Naive thymus-derived CD4-positive, alpha-beta T cell (primary cell): ENCODE measurements at regions of chr2 and their contacts with region 1.

Region 1: DNA sequence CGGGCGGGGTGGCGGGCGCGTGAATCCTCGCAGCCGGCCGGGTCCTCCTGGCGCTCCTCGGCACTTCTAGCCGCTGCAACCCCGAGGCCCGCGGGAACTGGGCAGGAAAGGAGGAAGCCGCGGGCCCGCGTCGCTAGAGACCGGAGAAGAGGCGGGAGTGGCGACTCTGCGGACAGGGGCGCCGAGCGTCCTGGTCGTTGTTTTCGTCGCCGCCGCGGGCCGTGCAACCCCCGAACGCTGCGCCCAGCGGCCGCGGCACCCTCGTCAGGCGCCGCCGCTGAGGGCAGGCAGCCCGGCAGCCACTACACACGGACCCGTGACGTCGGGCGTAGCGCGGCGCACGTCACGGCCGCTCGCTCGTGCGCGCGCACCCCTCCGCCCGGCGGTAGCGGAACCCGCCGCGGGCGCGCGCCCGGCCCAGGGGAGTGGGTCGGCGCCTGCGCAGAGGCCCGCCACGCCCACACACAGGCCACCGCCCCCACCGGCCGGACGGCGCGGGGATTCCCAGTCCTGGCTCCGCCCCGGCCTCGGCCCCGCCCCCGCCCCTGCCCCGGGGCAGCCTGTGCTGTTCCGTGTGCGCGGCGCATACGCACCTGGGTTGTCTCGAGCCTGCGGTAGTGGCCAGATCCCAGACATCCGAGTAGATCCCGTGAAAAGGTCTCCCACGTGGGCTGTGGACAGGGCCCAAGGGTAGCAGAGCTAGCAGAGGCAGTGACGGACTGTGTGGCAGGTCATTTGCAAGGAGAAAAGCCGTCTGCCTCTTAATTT is at the start of gene MAP3K2:
- DNase-seq: peak; percentile 89 to 97 (median 93)
- ATAC-seq: peak; percentile 88
- H3K4me3 ChIP-seq: peak within 1 kb of the TSS; percentile 78
- H3K4me3 Mint-ChIP-seq: peak within 1 kb of the TSS; percentile 87 to 97 (median 91)
- H3K27ac ChIP-seq: peak within 1 kb of the TSS; percentile 100
- H3K27ac Mint-ChIP-seq: peak within 1 kb of the TSS; percentile 95 to 99 (median 97)
- H3K4me1 ChIP-seq: peaks cover 23 to 30% of the 10 kb centered on the region in 2 donors
- H3K4me1 Mint-ChIP-seq: peaks cover 45 to 71% (median 67%) of the 10 kb centered on the region in 7 donors
- H3K27me3 ChIP-seq: no peaks in the 10 kb centered on the region
- H3K27me3 Mint-ChIP-seq: peaks cover 0 to 1% (median 0%) of the 10 kb centered on the region in 5 donors
- total RNA-seq, gene MAP3K2: 60.5 to 111 (median 84.5) TPM

Region 2: DNA sequence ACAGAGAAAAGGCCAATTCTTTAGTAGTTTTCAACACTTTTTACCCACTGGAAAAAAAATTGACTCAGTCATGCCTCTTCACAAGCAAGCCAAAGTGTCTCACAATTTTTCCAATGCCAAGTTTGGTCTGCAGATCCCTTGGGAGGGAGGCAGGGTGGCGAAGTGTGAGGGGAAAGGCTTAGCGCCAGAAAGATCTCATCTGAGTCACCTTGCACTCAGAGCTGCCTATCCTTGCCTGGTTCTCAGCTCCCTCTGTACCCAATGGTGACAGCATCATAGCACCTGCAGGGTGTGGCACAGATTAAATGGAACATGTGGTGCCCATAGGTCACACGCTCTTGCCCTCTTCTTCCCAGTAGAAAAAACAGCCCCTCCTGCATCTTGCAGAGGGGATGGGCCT is 787.1 kb before region 1 on chr2:
- CTCF ChIA-PET with region 1: no interaction called
- POLR2A ChIA-PET with region 1: no interaction called
- intact Hi-C with region 1: no loop called
- DNase-seq: no peak
- ATAC-seq: no peak
- H3K4me3 ChIP-seq: no peak overlapping the region
- H3K4me3 Mint-ChIP-seq: no peak overlapping the region
- H3K27ac ChIP-seq: no peak overlapping the region
- H3K27ac Mint-ChIP-seq: no peak overlapping the region
- H3K4me1 ChIP-seq: no peaks in the 10 kb centered on the region
- H3K4me1 Mint-ChIP-seq: no peaks in the 10 kb centered on the region
- H3K27me3 ChIP-seq: no peaks in the 10 kb centered on the region
- H3K27me3 Mint-ChIP-seq: peaks cover 0 to 12% (median 0%) of the 10 kb centered on the region in 5 donors

Region 3: GRCh38 chr2:127086990-127087790 is 300.6 kb before region 1 on chr2:
- CTCF ChIA-PET with region 1: interaction called, 3 read pairs
- POLR2A ChIA-PET with region 1: interaction called, 3 read pairs
- intact Hi-C with region 1: loop called (anchors 5 to 10 kb)
- DNase-seq: no peak
- ATAC-seq: peak; percentile 20
- H3K4me3 ChIP-seq: no peak overlapping the region
- H3K4me3 Mint-ChIP-seq: peak overlapping the region in 4 of 10 donors; percentile 10 to 34 (median 26)
- H3K27ac ChIP-seq: no peak overlapping the region
- H3K27ac Mint-ChIP-seq: peak overlapping the region in 8 of 9 donors; percentile 20 to 99 (median 62)
- H3K4me1 ChIP-seq: peaks cover 40 to 41% of the 10 kb centered on the region in 2 donors
- H3K4me1 Mint-ChIP-seq: peaks cover 34 to 56% (median 43%) of the 10 kb centered on the region in 7 donors
- H3K27me3 ChIP-seq: no peaks in the 10 kb centered on the region
- H3K27me3 Mint-ChIP-seq: peaks cover 0 to 9% (median 0%) of the 10 kb centered on the region in 5 donors

Region 4: DNA sequence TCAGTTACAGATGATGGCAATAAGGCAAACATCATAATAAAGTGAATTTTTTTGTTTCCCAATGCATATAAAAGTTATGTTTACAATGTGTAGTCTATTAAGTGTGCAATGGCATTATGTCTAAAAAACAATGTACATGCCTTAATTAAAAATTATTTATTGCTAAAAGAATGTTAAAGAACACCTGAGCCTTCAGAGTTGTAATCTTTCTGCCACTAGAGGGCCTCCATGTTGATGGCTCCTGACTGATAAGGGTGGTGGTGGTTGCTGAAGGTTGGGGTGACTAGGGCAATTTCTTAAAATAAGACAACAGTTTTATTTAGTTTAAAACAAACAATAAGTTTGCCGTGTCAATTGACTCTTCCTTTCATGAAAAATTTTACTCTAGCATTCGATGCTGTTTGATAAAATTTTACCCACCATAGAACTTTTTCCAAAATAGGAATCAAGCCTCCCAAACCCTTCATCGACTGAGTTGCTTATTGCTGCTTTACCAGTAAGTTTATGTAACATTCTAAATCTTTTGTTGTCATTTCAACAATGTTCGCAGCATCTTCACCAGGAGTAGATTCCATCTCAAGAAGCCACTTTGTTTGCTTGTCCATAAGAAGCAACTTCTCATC is 32.3 kb before region 1 on chr2:
- CTCF ChIA-PET with region 1: interaction called, 3 read pairs
- POLR2A ChIA-PET with region 1: no interaction called
- intact Hi-C with region 1: loop called in 1 of 2 experiments (anchors 2 kb)
- DNase-seq: peak in 7 of 9 donors; percentile 15 to 60 (median 41)
- ATAC-seq: peak; percentile 82
- H3K4me3 ChIP-seq: no peak overlapping the region
- H3K4me3 Mint-ChIP-seq: no peak overlapping the region
- H3K27ac ChIP-seq: no peak overlapping the region
- H3K27ac Mint-ChIP-seq: peak overlapping the region in 4 of 9 donors; percentile 17 to 83 (median 27)
- H3K4me1 ChIP-seq: peaks cover 0 to 11% of the 10 kb centered on the region in 2 donors
- H3K4me1 Mint-ChIP-seq: peaks cover 25 to 82% (median 70%) of the 10 kb centered on the region in 7 donors
- H3K27me3 ChIP-seq: no peaks in the 10 kb centered on the region
- H3K27me3 Mint-ChIP-seq: no peaks in the 10 kb centered on the region

Region 5: GRCh38 chr2:127408004-127408806 is 20.4 kb after region 1 on chr2:
- CTCF ChIA-PET with region 1: interaction called, 3 read pairs
- POLR2A ChIA-PET with region 1: interaction called, 4 read pairs
- intact Hi-C with region 1: loop called (anchors 1 kb)
- DNase-seq: peak; percentile 46 to 92 (median 64)
- ATAC-seq: peak; percentile 92
- H3K4me3 ChIP-seq: peak overlapping the region; percentile 36
- H3K4me3 Mint-ChIP-seq: peak overlapping the region; percentile 61 to 87 (median 74)
- H3K27ac ChIP-seq: no peak overlapping the region
- H3K27ac Mint-ChIP-seq: peak overlapping the region in 3 of 9 donors; percentile 48 to 83 (median 58)
- H3K4me1 ChIP-seq: no peaks in the 10 kb centered on the region
- H3K4me1 Mint-ChIP-seq: peaks cover 4 to 26% (median 12%) of the 10 kb centered on the region in 7 donors
- H3K27me3 ChIP-seq: no peaks in the 10 kb centered on the region
- H3K27me3 Mint-ChIP-seq: peaks cover 0 to 10% (median 0%) of the 10 kb centered on the region in 5 donors

Region 6: DNA sequence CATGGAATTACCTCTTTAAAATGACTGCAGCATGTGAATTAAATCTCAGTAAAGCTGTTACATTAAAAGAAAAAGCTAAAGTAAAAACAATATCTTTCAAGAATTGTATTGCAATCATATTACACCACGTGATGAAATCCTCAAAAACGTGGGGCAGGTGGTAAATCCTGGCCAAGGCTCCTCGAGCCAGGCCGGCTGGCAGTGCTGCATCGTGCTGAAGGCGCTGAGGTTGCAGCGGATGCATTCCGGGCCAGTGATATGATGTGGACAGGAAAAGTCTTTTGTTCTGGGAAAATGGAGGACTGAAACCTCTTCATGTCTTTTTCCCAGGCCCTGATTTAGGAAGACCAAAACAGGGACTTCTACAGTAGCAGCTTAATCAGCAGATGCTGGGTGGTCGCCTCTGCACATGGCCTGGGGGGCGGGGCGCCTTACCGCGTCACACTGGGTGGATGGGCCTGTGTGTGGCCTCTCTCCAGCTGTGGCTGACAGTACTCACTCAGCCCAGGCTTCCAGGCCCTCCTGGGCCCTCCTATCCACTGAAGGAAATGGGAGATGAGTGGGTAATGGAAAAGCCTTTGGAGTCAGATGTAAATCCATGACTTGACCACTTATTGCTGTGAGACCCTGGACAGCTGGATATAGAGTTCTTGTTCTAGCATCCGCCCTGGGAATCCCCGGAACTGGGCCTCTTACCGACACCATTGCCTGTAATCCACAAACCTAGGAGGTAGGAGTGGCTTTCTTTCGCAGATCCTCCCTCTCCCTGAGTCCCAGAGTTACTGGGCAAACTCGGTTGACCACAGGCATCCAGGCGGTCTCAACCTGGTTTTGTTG is 75.5 kb after region 1 on chr2:
- CTCF ChIA-PET with region 1: no interaction called
- POLR2A ChIA-PET with region 1: no interaction called
- intact Hi-C with region 1: no loop called
- DNase-seq: no peak
- ATAC-seq: no peak
- H3K4me3 ChIP-seq: no peak overlapping the region
- H3K4me3 Mint-ChIP-seq: no peak overlapping the region
- H3K27ac ChIP-seq: no peak overlapping the region
- H3K27ac Mint-ChIP-seq: no peak overlapping the region
- H3K4me1 ChIP-seq: no peaks in the 10 kb centered on the region
- H3K4me1 Mint-ChIP-seq: peaks cover 7 to 22% (median 15%) of the 10 kb centered on the region in 7 donors
- H3K27me3 ChIP-seq: no peaks in the 10 kb centered on the region
- H3K27me3 Mint-ChIP-seq: no peaks in the 10 kb centered on the region

Region 7: DNA sequence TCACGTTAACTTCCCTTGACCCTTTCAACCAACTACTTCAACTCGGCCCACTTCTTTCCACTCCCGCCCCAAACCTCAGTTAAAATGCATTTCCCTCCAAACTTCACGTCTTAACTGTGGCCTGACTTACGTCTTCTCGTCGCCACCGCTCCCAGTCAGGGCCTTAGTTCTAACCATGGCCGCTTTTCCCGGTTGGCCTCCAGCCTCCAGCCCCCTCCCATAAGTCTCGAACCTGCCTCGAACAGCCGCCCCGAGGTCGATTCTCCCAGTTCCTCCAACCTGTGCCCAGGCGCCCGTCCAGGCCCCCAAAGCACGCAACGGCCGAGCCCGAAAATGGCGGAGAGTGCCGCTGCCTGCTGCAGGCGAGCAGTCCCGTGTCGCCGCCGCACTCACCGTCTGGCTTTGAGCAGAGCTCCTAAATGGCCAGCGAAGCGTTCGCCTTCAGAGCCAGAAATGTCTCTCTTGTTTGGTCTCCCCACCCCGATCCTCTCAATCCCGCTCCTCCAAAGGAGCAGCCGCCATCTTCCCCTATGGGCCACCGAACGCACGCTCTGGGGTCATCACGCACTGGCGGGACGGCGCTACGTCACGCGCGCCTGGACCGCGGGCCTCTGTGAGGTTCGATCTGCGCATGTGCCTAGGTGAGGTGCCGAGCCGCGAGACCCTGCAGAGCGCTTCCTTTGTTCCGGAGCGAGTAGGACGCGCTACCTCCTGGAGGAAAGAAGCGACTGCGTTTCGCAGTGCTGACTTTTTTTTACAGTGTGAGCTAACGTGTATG is 423.0 kb after region 1 on chr2 and contains the start of gene WDR33:
- CTCF ChIA-PET with region 1: no interaction called
- POLR2A ChIA-PET with region 1: interaction called, 3 read pairs
- intact Hi-C with region 1: loop called in 1 of 2 experiments (anchors 1 kb)
- DNase-seq: peak; percentile 84 to 94 (median 93)
- ATAC-seq: peak; percentile 97
- H3K4me3 ChIP-seq: peak within 1 kb of the TSS; percentile 79
- H3K4me3 Mint-ChIP-seq: peak within 1 kb of the TSS; percentile 91 to 100 (median 96)
- H3K27ac ChIP-seq: peak within 1 kb of the TSS; percentile 98
- H3K27ac Mint-ChIP-seq: peak within 1 kb of the TSS; percentile 94 to 100 (median 99)
- H3K4me1 ChIP-seq: peaks cover 17 to 24% of the 10 kb centered on the region in 2 donors
- H3K4me1 Mint-ChIP-seq: peaks cover 33 to 62% (median 51%) of the 10 kb centered on the region in 7 donors
- H3K27me3 ChIP-seq: no peaks in the 10 kb centered on the region
- H3K27me3 Mint-ChIP-seq: peaks cover 0 to 12% (median 0%) of the 10 kb centered on the region in 5 donors
- total RNA-seq, gene WDR33: 62.6 to 98.7 (median 72.3) TPM

Region 8: GRCh38 chr2:128090945-128091725 is 703.3 kb after region 1 on chr2 and contains the start of gene UGGT1:
- CTCF ChIA-PET with region 1: no interaction called
- POLR2A ChIA-PET with region 1: no interaction called
- intact Hi-C with region 1: loop called in 1 of 2 experiments (anchors 2 kb)
- DNase-seq: peak; percentile 75 to 94 (median 92)
- ATAC-seq: peak; percentile 99
- H3K4me3 ChIP-seq: peak within 1 kb of the TSS; percentile 86
- H3K4me3 Mint-ChIP-seq: peak within 1 kb of the TSS; percentile 88 to 98 (median 94)
- H3K27ac ChIP-seq: peak within 1 kb of the TSS; percentile 75
- H3K27ac Mint-ChIP-seq: peak within 1 kb of the TSS; percentile 91 to 97 (median 94)
- H3K4me1 ChIP-seq: peaks cover 13 to 18% of the 10 kb centered on the region in 2 donors
- H3K4me1 Mint-ChIP-seq: peaks cover 27 to 60% (median 56%) of the 10 kb centered on the region in 7 donors
- H3K27me3 ChIP-seq: no peaks in the 10 kb centered on the region
- H3K27me3 Mint-ChIP-seq: no peaks in the 10 kb centered on the region
- total RNA-seq, gene UGGT1: 38.1 to 75.6 (median 46.6) TPM